Prostate gland (tissue), 2 donors: ENCODE measurements at regions of chr1 and their contacts with region 1.

Region 1: DNA sequence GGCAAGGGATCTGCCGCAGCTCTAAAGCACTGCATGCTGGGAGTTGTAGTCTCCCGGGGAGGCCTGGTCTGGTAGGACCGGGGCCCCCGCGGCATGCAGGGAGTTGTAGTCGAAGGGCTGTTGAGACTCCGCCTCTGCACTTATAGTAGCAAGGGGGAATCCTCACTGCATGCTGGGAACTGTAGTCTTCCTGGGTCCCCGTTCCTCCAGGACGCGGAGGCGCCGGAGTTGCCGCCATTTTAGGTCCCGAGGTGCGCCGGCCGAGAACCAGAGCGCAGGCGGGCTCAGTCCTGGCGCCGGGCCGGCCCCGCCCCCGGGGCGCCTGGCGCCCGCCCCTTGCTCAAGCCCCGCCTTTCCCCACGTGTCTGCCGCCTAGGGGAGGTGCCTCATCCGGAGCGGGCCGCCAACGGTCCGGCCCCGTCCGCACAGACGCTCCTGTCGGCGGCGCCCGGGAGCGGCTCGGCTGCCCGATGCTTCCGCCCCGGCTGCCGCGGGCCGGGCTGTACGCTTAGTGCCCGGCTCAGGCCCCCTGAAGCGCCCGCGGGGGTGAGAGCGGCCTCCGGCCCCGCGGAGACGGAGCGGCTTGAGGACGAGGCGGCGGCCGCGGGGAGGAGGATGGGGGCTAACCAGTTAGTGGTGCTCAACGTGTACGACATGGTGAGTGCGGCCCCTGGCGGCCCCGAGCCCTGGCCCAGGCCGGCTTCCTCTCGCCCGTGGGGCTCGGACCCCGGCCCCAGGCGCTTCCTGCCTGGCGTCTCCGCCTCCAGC is at the start of gene DESI2:
- DNase-seq: peak; percentile 100
- H3K4me3 ChIP-seq: peak within 1 kb of the TSS; percentile 84
- H3K27ac ChIP-seq: peak within 1 kb of the TSS; percentile 88 to 92
- H3K4me1 ChIP-seq: peaks cover 8% of the 10 kb centered on the region
- H3K27me3 ChIP-seq: no peaks in the 10 kb centered on the region
- CTCF ChIP-seq: peak; percentile 15 to 78 (median 53)
- POLR2A ChIP-seq: peak; percentile 99
- total RNA-seq, gene DESI2: 25.3 to 30.6 TPM

Region 2: DNA sequence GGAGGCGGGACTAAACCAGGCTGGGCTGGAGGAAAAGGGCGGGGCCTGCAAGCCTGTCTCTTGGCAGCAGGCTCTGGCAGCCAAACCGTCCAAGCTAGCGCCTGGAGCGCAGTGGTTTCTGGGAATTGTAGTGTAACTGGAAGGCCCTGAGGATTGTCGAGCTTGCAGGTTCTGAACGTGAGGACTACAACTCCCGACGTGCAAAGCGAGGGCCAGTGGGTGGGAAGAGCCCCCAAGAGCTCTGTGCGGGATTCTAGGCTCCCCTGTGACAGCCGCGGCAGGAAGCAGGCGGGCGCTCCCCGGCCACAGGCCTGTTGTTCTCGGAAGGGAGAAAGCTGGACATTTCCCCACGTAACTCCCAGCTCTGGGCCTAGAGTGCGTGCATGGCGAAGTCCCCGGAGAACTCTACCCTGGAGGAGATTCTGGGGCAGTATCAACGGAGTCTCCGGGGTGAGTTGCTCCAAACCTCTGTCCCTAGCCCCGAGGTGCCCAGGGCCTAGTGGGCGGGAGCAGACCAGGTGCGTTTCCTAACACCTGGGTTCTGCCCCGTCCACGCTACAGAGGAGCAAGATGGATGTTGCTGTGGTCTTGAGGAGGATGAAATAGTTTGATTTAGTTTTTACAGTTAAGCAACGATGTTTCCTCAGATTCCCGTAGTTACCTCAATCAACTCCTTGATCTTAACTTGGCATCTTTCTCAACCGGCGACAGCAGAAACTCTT is 1396.9 kb before region 1 on chr1 and contains the start of gene SDCCAG8:
- intact Hi-C with region 1: loop called (anchors 10 kb)
- DNase-seq: peak; percentile 99
- H3K4me3 ChIP-seq: peak within 1 kb of the TSS; percentile 81 to 85
- H3K27ac ChIP-seq: peak within 1 kb of the TSS; percentile 85 to 92
- H3K4me1 ChIP-seq: no peaks in the 10 kb centered on the region
- H3K27me3 ChIP-seq: no peaks in the 10 kb centered on the region
- CTCF ChIP-seq: no peak
- POLR2A ChIP-seq: peak; percentile 89
- total RNA-seq, gene SDCCAG8: 41.7 to 55.6 TPM

Region 3: DNA sequence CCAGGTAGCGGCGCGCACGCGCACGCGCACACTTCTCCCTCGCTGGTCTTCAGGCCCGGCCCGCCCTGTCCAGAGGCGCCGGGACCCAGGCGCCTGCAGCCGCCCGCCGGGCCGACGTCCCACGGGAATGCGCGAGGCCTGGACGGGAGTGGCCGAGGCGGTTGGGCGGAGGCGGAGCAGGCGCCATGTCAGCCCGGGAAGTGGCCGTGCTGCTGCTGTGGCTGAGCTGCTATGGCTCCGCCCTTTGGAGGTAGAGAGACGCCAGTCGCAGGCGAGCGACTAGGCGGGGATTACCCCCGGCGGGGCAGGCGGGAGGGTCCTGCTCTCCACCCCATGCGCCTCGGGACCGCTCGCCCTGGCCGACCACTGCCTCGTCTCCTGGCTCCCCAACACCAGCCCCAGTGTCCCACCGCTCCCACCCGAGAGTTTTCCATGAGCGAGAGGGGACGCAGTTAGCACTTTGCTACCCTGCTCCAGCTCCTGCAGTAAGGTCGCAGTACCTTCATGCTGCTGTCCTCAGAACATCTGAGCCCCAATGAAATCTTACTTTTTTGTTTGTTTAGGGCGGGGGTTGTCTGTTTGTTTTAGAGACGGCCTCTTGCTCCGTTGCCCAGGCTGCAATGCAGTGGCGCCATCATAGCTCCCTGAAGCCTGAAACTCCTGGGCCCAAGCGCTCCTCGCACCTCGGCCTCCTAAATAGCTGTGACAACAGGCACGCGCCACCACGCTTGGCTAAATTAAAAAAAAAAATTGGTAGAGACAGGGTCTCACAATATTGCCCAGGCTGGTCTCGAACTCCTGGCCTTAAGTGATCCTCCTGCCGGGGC is 191.4 kb before region 1 on chr1 and contains the start of gene CATSPERE:
- intact Hi-C with region 1: loop called (anchors 5 kb)
- DNase-seq: peak; percentile 85
- H3K4me3 ChIP-seq: peak within 1 kb of the TSS; percentile 43 to 47
- H3K27ac ChIP-seq: peak within 1 kb of the TSS; percentile 86 to 89
- H3K4me1 ChIP-seq: no peaks in the 10 kb centered on the region
- H3K27me3 ChIP-seq: no peaks in the 10 kb centered on the region
- CTCF ChIP-seq: peak in 1 of 4 experiments; percentile 35
- POLR2A ChIP-seq: peak; percentile 66
- total RNA-seq, gene CATSPERE: 0.32 to 3.9 TPM

Region 4: DNA sequence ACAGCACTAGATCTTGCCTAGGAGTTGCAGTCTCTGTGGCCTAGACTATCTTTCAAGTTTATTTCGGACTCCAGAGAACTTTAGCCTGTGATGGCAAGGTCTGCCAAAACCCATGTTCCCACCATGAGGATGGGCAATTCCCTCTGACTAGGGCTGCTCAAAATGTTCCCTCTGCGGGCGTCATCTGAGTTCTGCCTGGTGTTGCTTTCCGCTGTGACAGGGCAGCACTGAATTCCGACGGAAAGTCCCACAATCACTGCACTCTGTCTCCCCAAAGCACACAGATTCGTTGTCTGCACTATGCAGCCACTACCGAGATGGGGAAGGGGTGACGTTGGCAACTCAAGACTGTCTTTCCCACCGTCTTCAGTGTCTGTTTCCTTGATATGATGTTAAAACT is 116.6 kb before region 1 on chr1:
- intact Hi-C with region 1: no loop called
- DNase-seq: no peak
- H3K4me3 ChIP-seq: no peak overlapping the region
- H3K27ac ChIP-seq: no peak overlapping the region
- H3K4me1 ChIP-seq: no peaks in the 10 kb centered on the region
- H3K27me3 ChIP-seq: no peaks in the 10 kb centered on the region
- CTCF ChIP-seq: no peak
- POLR2A ChIP-seq: no peak

Region 5: DNA sequence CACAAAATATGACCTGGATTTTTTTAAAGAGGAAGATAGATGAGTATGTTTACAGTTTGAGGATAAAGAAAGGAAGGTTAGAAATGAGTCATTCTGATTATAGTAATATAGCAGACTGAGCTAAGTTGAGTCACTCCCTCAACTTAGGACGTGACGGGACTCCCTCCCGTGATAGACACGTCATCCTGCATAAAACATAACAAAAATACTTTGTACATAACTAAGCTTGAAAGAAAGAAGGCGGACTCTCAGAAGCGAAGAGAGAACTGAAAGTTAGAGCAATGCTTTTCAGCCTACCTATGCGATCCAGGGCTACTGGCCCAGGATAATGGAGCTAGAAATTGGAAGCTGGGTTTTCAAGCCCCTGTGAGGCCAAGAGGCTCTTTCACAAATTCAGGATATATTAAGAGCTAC is 52.9 kb before region 1 on chr1:
- intact Hi-C with region 1: loop called (anchors 5 kb)
- DNase-seq: no peak
- H3K4me3 ChIP-seq: no peak overlapping the region
- H3K27ac ChIP-seq: no peak overlapping the region
- H3K4me1 ChIP-seq: no peaks in the 10 kb centered on the region
- H3K27me3 ChIP-seq: no peaks in the 10 kb centered on the region
- CTCF ChIP-seq: no peak
- POLR2A ChIP-seq: peak; percentile 29

Region 6: DNA sequence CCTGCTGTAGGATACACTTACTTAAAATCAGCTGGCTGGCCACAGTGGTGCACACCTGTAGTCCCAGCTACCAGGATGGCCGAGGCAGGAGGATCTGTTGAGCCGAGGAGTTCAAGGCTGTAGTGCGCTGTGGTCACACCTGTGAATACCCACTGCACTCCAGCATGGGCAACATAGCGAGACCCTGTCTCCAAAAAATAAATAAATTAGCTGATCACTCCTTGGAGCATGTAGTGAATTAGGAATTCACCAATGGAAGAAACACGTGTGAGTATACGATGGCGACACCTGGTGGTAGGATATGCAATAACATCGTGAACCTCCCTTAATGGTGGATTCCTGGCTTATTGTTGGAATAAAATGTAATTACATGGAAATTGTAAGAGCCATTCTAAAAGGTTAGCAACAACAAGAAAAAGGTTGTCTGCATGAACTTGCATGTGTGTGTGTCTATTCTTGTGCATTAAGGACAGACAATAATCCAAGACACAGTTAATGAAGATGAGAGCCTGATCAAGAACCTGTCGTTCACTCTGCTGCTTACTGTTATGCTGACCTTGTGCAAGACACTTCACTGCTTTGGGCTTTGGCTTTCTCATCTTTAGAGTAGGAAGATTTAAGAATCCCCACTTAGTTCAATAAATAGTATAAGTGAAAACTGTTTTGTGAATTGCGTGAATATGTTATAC is 144.0 kb after region 1 on chr1:
- intact Hi-C with region 1: loop called (anchors 5 kb)
- DNase-seq: peak; percentile 51
- H3K4me3 ChIP-seq: no peak overlapping the region
- H3K27ac ChIP-seq: no peak overlapping the region
- H3K4me1 ChIP-seq: no peaks in the 10 kb centered on the region
- H3K27me3 ChIP-seq: no peaks in the 10 kb centered on the region
- CTCF ChIP-seq: peak; percentile 65 to 96 (median 84)
- POLR2A ChIP-seq: no peak

Region 7: DNA sequence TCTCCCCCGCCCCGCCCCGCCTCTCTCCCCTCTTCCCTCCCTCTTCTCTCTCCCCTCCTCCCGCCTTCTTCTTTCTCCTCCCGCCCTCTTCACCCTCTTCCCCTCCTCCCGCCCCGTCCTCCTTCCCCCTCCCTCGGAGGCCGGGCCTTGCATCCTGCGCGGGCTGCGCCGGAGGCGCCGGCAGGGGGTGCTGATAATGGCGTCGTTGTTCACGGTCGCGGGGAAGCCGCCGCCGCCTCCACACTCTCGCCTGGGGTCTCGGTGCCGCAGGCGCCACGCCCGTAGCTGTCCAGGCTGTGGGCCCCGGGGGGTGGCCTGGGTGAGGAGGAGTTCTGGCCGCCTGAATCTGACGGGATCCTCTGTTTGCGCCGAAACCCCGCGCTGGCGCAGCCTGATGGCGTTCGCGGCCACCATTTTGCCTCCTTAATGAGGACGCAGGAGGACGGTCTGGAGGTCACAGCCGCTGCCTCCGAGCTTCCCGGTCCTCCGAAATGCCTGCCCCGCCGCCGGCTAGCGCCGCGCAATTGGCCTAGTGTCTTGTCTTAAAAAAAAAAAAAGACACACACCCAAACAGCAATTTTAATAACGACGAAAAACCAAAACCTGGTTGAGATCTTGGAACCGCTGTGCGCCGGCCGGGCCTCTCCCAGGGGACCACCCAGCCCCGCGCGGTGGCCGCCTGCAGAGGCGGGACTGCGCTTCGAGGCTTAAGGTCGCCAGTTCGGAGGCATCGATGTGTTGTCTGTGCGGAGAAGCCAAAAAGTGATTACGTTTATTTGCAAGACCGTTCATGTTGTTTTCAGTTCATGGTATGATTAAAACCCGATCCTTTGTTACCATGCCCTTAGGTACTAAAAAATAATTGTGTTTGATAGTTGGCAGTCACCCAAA is 318.0 kb after region 1 on chr1:
- intact Hi-C with region 1: loop called (anchors 2 kb)
- DNase-seq: peak; percentile 93
- H3K4me3 ChIP-seq: peak overlapping the region; percentile 71 to 74
- H3K27ac ChIP-seq: peak overlapping the region; percentile 99 to 100
- H3K4me1 ChIP-seq: peaks cover 6% of the 10 kb centered on the region
- H3K27me3 ChIP-seq: no peaks in the 10 kb centered on the region
- CTCF ChIP-seq: peak; percentile 50 to 81 (median 64)
- POLR2A ChIP-seq: peak; percentile 63

Region 8: DNA sequence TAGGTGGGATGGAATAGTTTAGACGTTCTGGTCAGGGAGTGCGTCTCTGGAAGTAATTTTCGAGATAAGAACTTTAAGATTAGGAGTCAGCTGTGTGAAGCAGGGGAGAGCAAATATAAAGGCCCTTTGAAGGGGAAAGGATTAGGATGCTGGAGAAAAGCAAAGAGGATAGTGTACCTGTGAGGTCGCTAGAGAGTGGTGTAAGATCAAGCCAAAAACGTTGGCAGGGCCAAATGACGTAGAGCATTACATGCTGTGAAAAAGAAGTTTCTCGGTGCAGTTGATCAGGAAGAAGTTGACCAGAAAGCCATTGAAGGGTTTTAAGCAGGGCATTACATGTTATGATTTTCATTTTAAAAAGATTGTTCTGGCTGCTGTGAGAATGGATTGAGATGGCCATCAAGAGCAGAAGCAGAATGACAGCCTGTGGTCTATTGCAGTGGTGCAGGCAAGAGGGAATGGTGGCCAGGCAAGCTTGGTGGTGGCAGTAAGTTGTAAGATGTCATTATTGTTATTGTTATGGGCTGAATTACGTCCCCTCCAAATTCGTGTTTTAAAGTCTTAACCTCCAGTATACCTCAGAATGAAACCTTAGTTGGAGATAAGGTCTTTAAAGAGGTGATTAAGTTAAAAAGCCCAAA is 388.3 kb after region 1 on chr1:
- intact Hi-C with region 1: loop called (anchors 5 kb)
- DNase-seq: no peak
- H3K4me3 ChIP-seq: no peak overlapping the region
- H3K27ac ChIP-seq: no peak overlapping the region
- H3K4me1 ChIP-seq: no peaks in the 10 kb centered on the region
- H3K27me3 ChIP-seq: no peaks in the 10 kb centered on the region
- CTCF ChIP-seq: no peak
- POLR2A ChIP-seq: no peak